CD4-positive, alpha-beta T cell (primary cell): ENCODE measurements at regions of chr1 and their contacts with region 1.

Region 1: DNA sequence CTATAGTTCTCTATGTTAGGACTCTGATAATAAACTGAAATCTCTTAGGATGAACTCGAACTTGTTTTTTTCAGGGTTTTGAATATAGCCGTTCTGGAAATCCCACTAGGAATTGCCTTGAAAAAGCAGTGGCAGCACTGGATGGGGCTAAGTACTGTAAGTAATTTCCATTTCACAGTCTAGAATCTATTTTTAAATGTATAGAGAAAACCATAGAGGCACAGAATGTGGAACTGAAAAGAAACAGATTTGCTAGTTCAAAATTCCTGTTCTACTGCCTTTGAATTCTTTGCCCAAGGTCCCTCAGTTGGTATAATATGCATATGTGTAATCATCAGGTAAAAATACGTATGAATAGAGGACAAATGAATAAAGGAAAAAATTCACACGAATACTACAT is 4.8 kb downstream of the CTH start:
- DNase-seq: no peak
- ATAC-seq: no peak
- H3K4me3 ChIP-seq: no peak overlapping the region
- H3K4me3 Mint-ChIP-seq: no peak overlapping the region
- H3K27ac ChIP-seq: no peak overlapping the region
- H3K27ac Mint-ChIP-seq: no peak overlapping the region
- H3K4me1 ChIP-seq: peaks cover 6% of the 10 kb centered on the region
- H3K4me1 Mint-ChIP-seq: peaks cover 22% of the 10 kb centered on the region
- H3K27me3 ChIP-seq: no peaks in the 10 kb centered on the region
- H3K27me3 Mint-ChIP-seq: no peaks in the 10 kb centered on the region
- CTCF ChIP-seq: no peak

Region 2: GRCh38 chr1:69737527-69738185 is 678.2 kb before region 1 on chr1:
- CTCF ChIA-PET with region 1: no interaction called
- POLR2A ChIA-PET with region 1: no interaction called
- intact Hi-C with region 1: no loop called
- DNase-seq: peak in 3 of 14 experiments; percentile 26 to 59 (median 28)
- ATAC-seq: no peak
- H3K4me3 ChIP-seq: no peak overlapping the region
- H3K4me3 Mint-ChIP-seq: no peak overlapping the region
- H3K27ac ChIP-seq: no peak overlapping the region
- H3K27ac Mint-ChIP-seq: no peak overlapping the region
- H3K4me1 ChIP-seq: no peaks in the 10 kb centered on the region
- H3K4me1 Mint-ChIP-seq: no peaks in the 10 kb centered on the region
- H3K27me3 ChIP-seq: no peaks in the 10 kb centered on the region
- H3K27me3 Mint-ChIP-seq: no peaks in the 10 kb centered on the region
- CTCF ChIP-seq: no peak

Region 3: GRCh38 chr1:70200065-70200464 is 215.8 kb before region 1 on chr1:
- CTCF ChIA-PET with region 1: no interaction called
- POLR2A ChIA-PET with region 1: interaction called, 17 read pairs
- intact Hi-C with region 1: loop called in 1 of 2 experiments (anchors 2 kb)
- DNase-seq: no peak
- ATAC-seq: no peak
- H3K4me3 ChIP-seq: no peak overlapping the region
- H3K4me3 Mint-ChIP-seq: no peak overlapping the region
- H3K27ac ChIP-seq: no peak overlapping the region
- H3K27ac Mint-ChIP-seq: no peak overlapping the region
- H3K4me1 ChIP-seq: peaks cover 9% of the 10 kb centered on the region
- H3K4me1 Mint-ChIP-seq: peaks cover 47% of the 10 kb centered on the region
- H3K27me3 ChIP-seq: no peaks in the 10 kb centered on the region
- H3K27me3 Mint-ChIP-seq: no peaks in the 10 kb centered on the region
- CTCF ChIP-seq: no peak

Region 4: DNA sequence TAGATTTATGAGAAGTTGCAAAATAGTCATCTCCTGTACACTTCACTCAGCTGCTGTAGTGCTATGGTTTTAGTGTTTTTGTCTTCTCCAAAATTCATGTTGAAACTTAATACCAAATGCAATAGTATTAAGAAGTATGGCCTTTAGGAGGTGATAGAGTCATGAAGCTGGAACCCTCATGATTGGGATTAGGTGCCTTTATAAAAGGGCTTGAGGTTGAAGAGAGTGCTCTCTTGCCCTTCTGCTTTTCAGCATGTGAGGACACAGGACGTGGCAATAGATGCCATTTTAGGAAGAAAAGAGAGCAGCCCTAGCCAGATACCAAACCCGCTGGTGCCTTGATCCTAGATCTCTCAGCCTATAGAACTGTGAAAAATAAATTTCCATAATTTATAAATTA is 82.8 kb after region 1 on chr1:
- CTCF ChIA-PET with region 1: no interaction called
- POLR2A ChIA-PET with region 1: no interaction called
- intact Hi-C with region 1: no loop called
- DNase-seq: no peak
- ATAC-seq: no peak
- H3K4me3 ChIP-seq: no peak overlapping the region
- H3K4me3 Mint-ChIP-seq: no peak overlapping the region
- H3K27ac ChIP-seq: no peak overlapping the region
- H3K27ac Mint-ChIP-seq: no peak overlapping the region
- H3K4me1 ChIP-seq: no peaks in the 10 kb centered on the region
- H3K4me1 Mint-ChIP-seq: no peaks in the 10 kb centered on the region
- H3K27me3 ChIP-seq: no peaks in the 10 kb centered on the region
- H3K27me3 Mint-ChIP-seq: peaks cover 8% of the 10 kb centered on the region
- CTCF ChIP-seq: no peak